ENCODE measurements at regions of chr11 and their contacts with region 1.

Region 1: GRCh38 chr11:63838678-63839507 is at the start of gene MARK2:
- DNase-seq: peak; percentile 100
- H3K4me3 Mint-ChIP-seq: peak within 1 kb of the TSS; percentile 97
- H3K27ac Mint-ChIP-seq: peak within 1 kb of the TSS; percentile 65
- H3K4me1 Mint-ChIP-seq: peaks cover 48% of the 10 kb centered on the region
- H3K27me3 Mint-ChIP-seq: no peaks in the 10 kb centered on the region
- total RNA-seq, gene MARK2: 15.8 to 17.6 TPM

Region 2: GRCh38 chr11:63866211-63866610 is 27.3 kb after region 1 on chr11:
- CTCF ChIA-PET with region 1: interaction called, 13 read pairs
- intact Hi-C with region 1: loop called (anchors 1 kb)
- DNase-seq: peak; percentile 97
- H3K4me3 Mint-ChIP-seq: peak overlapping the region; percentile 11
- H3K27ac Mint-ChIP-seq: no peak overlapping the region
- H3K4me1 Mint-ChIP-seq: peaks cover 80% of the 10 kb centered on the region
- H3K27me3 Mint-ChIP-seq: no peaks in the 10 kb centered on the region

Region 3: GRCh38 chr11:63888170-63889086 is 49.5 kb after region 1 on chr11:
- CTCF ChIA-PET with region 1: interaction called, 18 read pairs
- intact Hi-C with region 1: loop called (anchors 5 kb)
- DNase-seq: peak; percentile 78
- H3K4me3 Mint-ChIP-seq: peak overlapping the region; percentile 83
- H3K27ac Mint-ChIP-seq: peak overlapping the region; percentile 87
- H3K4me1 Mint-ChIP-seq: peaks cover 79% of the 10 kb centered on the region
- H3K27me3 Mint-ChIP-seq: no peaks in the 10 kb centered on the region

Region 4: DNA sequence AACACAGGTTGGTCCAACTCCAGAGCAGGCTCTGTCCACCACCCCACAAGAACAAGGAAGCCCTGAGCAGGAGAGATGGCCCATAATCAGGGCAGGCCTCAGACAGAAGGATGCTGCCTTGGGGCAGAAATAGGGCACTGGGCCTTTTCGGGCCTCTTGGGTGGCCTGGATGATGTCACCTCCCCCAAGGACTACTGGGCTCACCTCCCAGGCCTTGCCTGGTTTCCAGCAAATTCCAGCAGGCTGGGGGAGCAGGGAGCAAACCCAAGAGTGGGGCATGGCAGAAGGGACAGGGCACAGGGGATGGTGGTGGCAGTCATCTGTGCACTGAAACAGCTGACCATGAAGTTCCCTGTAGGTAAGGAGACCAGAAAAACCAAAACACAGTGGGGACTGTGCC is 94.6 kb after region 1 on chr11:
- CTCF ChIA-PET with region 1: interaction called, 16 read pairs
- intact Hi-C with region 1: loop called (anchors 1 kb)
- DNase-seq: no peak
- H3K4me3 Mint-ChIP-seq: no peak overlapping the region
- H3K27ac Mint-ChIP-seq: no peak overlapping the region
- H3K4me1 Mint-ChIP-seq: peaks cover 3% of the 10 kb centered on the region
- H3K27me3 Mint-ChIP-seq: no peaks in the 10 kb centered on the region

Region 5: DNA sequence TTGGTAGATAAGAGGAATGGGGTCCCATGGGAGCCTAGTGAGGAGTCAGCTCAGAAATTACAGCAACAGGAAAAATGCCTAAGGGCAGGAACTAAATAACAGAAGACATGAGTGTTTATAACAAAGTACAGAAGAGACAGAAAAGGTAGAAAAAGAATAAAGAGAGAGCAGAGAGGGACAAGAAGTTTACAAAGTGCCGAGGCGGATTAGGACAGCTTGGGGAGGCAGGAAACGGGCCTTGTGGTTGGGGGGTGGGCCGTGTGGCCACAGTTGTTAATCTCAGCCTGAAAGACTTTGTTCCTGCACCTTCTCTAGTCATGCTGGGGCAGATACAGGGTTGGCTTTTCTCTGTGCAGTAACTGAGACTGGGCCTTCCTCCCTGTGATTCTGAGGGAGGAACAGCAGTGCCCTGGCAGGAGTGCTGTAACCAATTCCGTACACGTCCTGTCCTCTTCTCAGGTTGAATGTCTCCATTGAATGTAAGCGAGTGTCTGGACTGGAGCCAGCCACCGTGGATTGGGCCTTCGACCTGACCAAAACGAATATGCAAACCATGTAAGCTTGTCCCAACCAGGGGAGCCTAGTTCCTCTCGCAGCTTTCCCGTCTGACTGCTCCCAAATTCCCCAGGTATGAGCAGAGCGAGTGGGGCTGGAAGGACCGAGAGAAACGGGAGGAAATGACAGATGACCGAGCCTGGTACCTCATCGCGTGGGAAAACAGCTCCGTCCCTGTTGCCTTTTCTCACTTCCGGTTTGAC is 113.1 kb after region 1 on chr11:
- CTCF ChIA-PET with region 1: interaction called, 82 read pairs
- intact Hi-C with region 1: no loop called
- DNase-seq: peak; percentile 60
- H3K4me3 Mint-ChIP-seq: no peak overlapping the region
- H3K27ac Mint-ChIP-seq: peak overlapping the region; percentile 26
- H3K4me1 Mint-ChIP-seq: peaks cover 20% of the 10 kb centered on the region
- H3K27me3 Mint-ChIP-seq: no peaks in the 10 kb centered on the region

Region 6: DNA sequence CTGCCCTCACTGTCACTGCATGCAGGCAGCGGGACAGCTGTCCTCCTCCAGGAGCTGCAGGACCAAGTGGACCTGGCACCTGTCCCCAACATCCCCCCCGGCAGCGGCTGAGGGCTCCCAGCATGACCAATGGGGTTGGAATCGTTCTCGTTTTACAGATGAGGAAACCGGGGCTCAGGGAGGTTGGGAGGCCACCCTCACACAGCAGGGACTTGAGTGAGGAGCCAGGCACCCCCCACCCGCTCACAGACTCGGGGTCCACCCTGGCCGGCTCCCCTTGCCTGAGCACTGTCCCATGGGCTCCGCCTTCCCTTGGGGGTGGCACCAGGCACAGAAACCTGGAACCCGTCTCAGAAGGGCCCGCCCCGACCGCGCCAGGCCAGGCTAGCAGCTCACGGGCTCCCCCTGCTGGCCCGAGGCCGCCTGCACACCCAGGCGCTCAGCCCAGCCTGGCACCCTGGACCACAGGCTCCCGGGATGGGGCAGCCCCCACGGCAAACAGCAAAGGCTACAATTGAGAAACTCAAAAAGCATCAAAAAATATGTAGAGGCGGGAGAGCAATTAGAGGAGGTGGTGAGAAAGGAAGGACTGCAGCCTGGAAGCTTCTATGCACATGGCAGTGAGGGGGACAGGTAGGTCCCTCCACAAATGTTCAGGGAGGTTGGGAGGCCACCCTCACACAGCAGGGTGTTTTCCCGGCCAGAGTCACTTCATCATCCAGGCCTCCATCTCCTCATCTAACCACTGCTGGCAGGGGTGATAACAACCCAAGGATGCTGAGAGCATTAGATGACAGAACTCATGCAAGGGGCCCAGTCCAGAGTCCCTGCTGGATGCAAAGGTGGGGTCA is 314.2 kb after region 1 on chr11:
- CTCF ChIA-PET with region 1: interaction called, 10 read pairs
- intact Hi-C with region 1: loop called (anchors 1 kb)
- DNase-seq: peak; percentile 71
- H3K4me3 Mint-ChIP-seq: no peak overlapping the region
- H3K27ac Mint-ChIP-seq: no peak overlapping the region
- H3K4me1 Mint-ChIP-seq: peaks cover 3% of the 10 kb centered on the region
- H3K27me3 Mint-ChIP-seq: no peaks in the 10 kb centered on the region

Region 7: GRCh38 chr11:64304316-64305072 is 465.6 kb after region 1 on chr11:
- CTCF ChIA-PET with region 1: no interaction called
- intact Hi-C with region 1: loop called (anchors 2 kb)
- DNase-seq: peak; percentile 98
- H3K4me3 Mint-ChIP-seq: peak overlapping the region; percentile 88
- H3K27ac Mint-ChIP-seq: peak overlapping the region; percentile 91
- H3K4me1 Mint-ChIP-seq: peaks cover 39% of the 10 kb centered on the region
- H3K27me3 Mint-ChIP-seq: peaks cover 19% of the 10 kb centered on the region